Endothelial cell of umbilical vein (primary cell): ENCODE measurements at regions of chr3 and their contacts with region 1.

Region 1: GRCh38 chr3:120506828-120507774 is 56.3 kb upstream of the FSTL1 start:
- DNase-seq: peak; percentile 74
- H3K4me3 ChIP-seq: no peak overlapping the region
- H3K27ac ChIP-seq: peak overlapping the region; percentile 15
- H3K4me1 ChIP-seq: peaks cover 17% of the 10 kb centered on the region
- H3K27me3 ChIP-seq: no peaks in the 10 kb centered on the region
- CTCF ChIP-seq: peak; percentile 71 to 74
- POLR2A ChIP-seq: no peak

Region 2: GRCh38 chr3:120245386-120245785 is 261.7 kb before region 1 on chr3:
- CTCF ChIA-PET with region 1: no interaction called
- POLR2A ChIA-PET with region 1: no interaction called
- dilution Hi-C with region 1: no loop called
- intact Hi-C with region 1: loop called (anchors 1 kb)
- DNase-seq: no peak
- H3K4me3 ChIP-seq: no peak overlapping the region
- H3K27ac ChIP-seq: no peak overlapping the region
- H3K4me1 ChIP-seq: no peaks in the 10 kb centered on the region
- H3K27me3 ChIP-seq: peaks cover 10 to 21% of the 10 kb centered on the region in 2 experiments
- CTCF ChIP-seq: no peak
- POLR2A ChIP-seq: no peak

Region 3: DNA sequence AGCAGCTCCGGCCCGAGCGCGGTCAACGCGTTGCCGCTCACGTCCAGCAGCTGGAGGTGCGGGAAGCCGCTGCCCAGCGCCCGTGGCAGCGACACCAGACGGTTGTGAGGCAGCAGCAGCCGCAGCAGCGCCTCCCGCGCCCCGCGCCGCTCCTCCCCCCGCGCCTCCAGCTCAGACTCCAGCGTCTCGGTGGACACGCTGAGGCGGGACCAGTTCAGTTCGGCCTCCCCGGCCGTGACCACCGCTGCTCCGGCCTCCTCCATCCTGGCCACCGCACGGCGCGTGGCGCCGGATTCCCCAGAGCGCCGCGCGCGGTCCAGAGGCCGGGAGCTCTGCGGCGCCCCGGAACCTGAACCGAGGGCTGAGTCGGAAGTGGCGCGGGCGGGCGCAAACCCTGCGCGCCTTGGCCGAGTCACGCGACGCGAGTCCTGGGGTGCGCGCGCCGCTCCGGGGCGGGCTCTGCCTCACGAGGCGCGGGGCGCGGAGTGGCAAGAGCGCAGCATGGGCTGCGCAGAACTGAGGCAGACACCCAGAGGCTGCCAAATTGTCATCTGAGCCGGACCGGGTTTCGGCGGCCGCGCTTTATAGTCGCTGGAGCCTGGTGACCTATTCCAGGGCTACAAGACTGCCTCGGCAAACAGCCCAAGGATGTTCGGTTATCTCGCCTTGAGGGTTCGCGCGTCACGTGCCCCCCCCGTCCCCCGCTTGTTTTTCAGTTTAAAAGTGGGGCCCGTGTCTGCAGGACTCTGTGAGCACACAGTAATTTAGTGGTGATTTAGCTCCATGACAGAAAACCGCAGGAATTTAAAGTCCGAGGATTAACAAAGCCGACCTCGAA is 157.9 kb before region 1 on chr3 and contains the start of gene LRRC58:
- CTCF ChIA-PET with region 1: no interaction called
- POLR2A ChIA-PET with region 1: no interaction called
- dilution Hi-C with region 1: no loop called
- intact Hi-C with region 1: loop called (anchors 2 kb)
- DNase-seq: peak; percentile 88
- H3K4me3 ChIP-seq: peak within 1 kb of the TSS; percentile 34 to 76 (median 59)
- H3K27ac ChIP-seq: peak within 1 kb of the TSS; percentile 67
- H3K4me1 ChIP-seq: peaks cover 14% of the 10 kb centered on the region
- H3K27me3 ChIP-seq: peaks cover 5% of the 10 kb centered on the region in 2 experiments
- CTCF ChIP-seq: peak; percentile 5 to 49
- POLR2A ChIP-seq: peak; percentile 81
- total RNA-seq, gene LRRC58: 11.9 and 12.3 TPM in 2 replicates

Region 4: DNA sequence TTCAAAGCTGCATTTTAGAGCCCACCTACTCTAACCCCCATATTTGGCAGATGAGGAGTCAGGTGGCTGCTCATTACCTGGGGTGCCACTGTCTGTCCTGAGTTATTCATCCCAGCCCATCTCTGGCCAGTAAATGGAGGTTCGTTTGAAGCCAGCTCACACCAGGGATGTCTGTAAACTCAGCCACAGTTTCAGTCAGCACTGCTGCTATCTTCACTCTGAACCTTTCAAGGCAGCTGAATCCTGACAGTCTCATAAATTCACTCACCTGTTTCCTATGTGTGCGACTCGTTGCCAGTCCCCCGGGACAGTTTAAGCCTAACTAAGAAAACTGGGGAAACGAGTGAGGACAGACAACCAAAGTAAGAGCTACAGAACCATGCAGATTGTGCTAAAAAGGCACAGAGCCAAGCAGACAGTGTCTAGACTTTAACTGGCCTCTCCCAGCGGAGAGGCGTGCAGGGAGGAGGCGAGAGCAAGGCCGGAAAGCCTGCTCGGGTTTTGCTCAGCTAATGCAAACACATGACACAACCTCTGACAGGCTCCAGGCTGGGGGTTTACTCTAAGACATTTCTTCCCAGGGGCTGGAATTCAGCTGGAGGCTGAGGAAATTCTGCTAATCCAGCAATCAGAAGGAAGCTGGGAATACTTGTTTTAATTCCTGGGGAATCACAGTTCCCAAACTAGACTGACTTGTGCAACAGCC is 68.3 kb before region 1 on chr3:
- CTCF ChIA-PET with region 1: interaction called, 9 read pairs
- POLR2A ChIA-PET with region 1: no interaction called
- dilution Hi-C with region 1: no loop called
- intact Hi-C with region 1: loop called (anchors 1 kb)
- DNase-seq: peak; percentile 95
- H3K4me3 ChIP-seq: no peak overlapping the region
- H3K27ac ChIP-seq: peak overlapping the region; percentile 91
- H3K4me1 ChIP-seq: peaks cover 66% of the 10 kb centered on the region
- H3K27me3 ChIP-seq: no peaks in the 10 kb centered on the region
- CTCF ChIP-seq: no peak
- POLR2A ChIP-seq: no peak

Region 5: GRCh38 chr3:120450600-120451271 is 56.4 kb before region 1 on chr3 and contains the start of gene FSTL1:
- CTCF ChIA-PET with region 1: interaction called, 20 read pairs
- POLR2A ChIA-PET with region 1: no interaction called
- dilution Hi-C with region 1: no loop called
- intact Hi-C with region 1: loop called (anchors 1 kb)
- DNase-seq: peak; percentile 67
- H3K4me3 ChIP-seq: peak within 1 kb of the TSS; percentile 70 to 95 (median 92)
- H3K27ac ChIP-seq: peak within 1 kb of the TSS; percentile 89
- H3K4me1 ChIP-seq: peaks cover 22% of the 10 kb centered on the region
- H3K27me3 ChIP-seq: no peaks in the 10 kb centered on the region
- CTCF ChIP-seq: no peak
- POLR2A ChIP-seq: peak; percentile 95
- total RNA-seq, gene FSTL1: 522 and 562 TPM in 2 replicates